Caco-2 (cell line): ENCODE measurements at regions of chr13 and their contacts with region 1.

Region 1: DNA sequence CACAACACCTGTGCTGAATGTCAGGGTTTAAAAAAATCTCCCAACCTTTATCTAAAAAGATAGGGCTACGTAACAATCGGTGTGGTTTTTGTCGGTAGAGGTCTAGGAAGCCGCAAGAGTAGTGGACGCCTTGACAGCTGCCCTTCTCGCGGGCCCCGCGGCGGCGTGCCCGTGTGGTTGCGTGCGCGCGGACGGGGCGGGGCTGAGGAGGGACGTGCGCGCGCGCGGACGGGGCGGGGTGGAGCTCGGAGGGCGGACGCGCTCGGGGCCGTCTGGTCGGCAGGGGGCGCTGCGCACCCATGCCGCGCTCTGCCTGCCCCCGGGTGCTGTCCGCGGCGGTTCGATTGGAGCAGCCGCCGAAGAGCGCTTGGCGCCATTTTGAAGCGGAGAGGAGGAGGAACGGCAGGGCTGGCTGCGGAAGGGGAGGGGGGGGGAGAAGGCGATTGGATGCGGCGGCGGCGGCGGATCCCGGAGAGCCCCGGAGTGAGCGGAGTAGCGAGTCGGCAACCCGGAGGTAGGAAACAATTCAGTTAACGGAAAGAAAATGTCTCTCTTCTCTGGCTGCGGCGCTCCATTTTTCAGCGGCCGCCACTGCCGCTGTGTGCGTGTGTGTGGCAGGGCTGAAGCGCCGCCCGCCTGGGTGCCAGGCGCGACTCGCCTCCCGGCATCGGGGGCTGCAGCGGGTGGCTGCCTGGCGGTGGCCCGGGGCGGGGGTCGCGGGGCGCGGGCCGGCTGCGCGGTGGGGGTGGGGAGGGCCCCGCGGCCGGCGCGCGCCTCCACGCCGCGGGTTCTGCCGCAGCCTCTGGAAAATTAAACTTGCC is at the start of gene PDS5B:
- DNase-seq: peak; percentile 96 to 98
- H3K4me3 ChIP-seq: peak within 1 kb of the TSS; percentile 97
- H3K4me3 Mint-ChIP-seq: peak within 1 kb of the TSS; percentile 89
- H3K27ac Mint-ChIP-seq: peak within 1 kb of the TSS; percentile 88
- H3K4me1 ChIP-seq: no peaks in the 10 kb centered on the region
- H3K4me1 Mint-ChIP-seq: peaks cover 13% of the 10 kb centered on the region
- H3K27me3 ChIP-seq: no peaks in the 10 kb centered on the region
- H3K27me3 Mint-ChIP-seq: peaks cover 6% of the 10 kb centered on the region
- CTCF ChIP-seq: peak; percentile 64 to 96
- total RNA-seq, gene PDS5B: 53.0 and 54.9 TPM in 2 replicates

Region 2: GRCh38 chr13:32639502-32640105 is 53.3 kb after region 1 on chr13:
- CTCF ChIA-PET with region 1: interaction called, 19 read pairs
- POLR2A ChIA-PET with region 1: no interaction called
- intact Hi-C with region 1: loop called (anchors 1 kb)
- DNase-seq: peak; percentile 54 to 64
- H3K4me3 ChIP-seq: no peak overlapping the region
- H3K4me3 Mint-ChIP-seq: no peak overlapping the region
- H3K27ac Mint-ChIP-seq: no peak overlapping the region
- H3K4me1 ChIP-seq: no peaks in the 10 kb centered on the region
- H3K4me1 Mint-ChIP-seq: peaks cover 12% of the 10 kb centered on the region
- H3K27me3 ChIP-seq: no peaks in the 10 kb centered on the region
- H3K27me3 Mint-ChIP-seq: no peaks in the 10 kb centered on the region
- CTCF ChIP-seq: peak; percentile 61 to 91

Region 3: DNA sequence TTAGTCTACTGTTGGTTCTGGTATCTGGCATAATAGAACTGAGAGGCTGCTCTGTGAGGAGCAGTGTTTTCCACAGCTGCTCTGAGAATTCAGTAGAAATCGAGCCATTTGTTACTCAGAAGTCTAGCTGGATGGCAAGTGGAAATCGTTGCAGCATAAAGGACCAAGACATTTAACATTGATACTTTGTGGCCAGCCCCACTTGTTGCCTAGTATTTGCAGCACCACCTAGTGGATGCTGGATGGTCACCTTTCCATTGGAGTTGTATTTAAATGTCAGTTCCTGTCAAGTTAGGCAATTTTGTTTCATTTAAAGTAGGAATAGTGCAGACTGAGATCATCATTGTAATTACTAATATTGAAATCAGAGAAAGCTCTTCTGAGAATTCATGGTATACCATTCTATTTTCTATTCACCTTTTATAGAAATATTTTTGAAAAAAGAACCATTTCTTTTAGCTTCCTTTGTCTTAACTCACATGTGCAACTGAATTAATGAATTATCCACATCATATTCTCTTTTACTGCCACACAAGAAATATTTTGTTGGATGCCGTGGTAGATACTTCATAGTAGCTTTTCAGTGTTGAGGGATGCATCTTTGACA is 64.5 kb after region 1 on chr13:
- CTCF ChIA-PET with region 1: interaction called, 6 read pairs
- POLR2A ChIA-PET with region 1: no interaction called
- intact Hi-C with region 1: loop called (anchors 2 kb)
- DNase-seq: peak; percentile 68 to 69
- H3K4me3 ChIP-seq: no peak overlapping the region
- H3K4me3 Mint-ChIP-seq: no peak overlapping the region
- H3K27ac Mint-ChIP-seq: no peak overlapping the region
- H3K4me1 ChIP-seq: no peaks in the 10 kb centered on the region
- H3K4me1 Mint-ChIP-seq: peaks cover 21% of the 10 kb centered on the region
- H3K27me3 ChIP-seq: no peaks in the 10 kb centered on the region
- H3K27me3 Mint-ChIP-seq: no peaks in the 10 kb centered on the region
- CTCF ChIP-seq: peak; percentile 77 to 84

Region 4: GRCh38 chr13:32669030-32669646 is 82.8 kb after region 1 on chr13:
- CTCF ChIA-PET with region 1: interaction called, 20 read pairs
- POLR2A ChIA-PET with region 1: no interaction called
- intact Hi-C with region 1: loop called (anchors 1 kb)
- DNase-seq: peak in 1 of 2 experiments; percentile 52
- H3K4me3 ChIP-seq: no peak overlapping the region
- H3K4me3 Mint-ChIP-seq: no peak overlapping the region
- H3K27ac Mint-ChIP-seq: no peak overlapping the region
- H3K4me1 ChIP-seq: no peaks in the 10 kb centered on the region
- H3K4me1 Mint-ChIP-seq: peaks cover 6% of the 10 kb centered on the region
- H3K27me3 ChIP-seq: no peaks in the 10 kb centered on the region
- H3K27me3 Mint-ChIP-seq: no peaks in the 10 kb centered on the region
- CTCF ChIP-seq: peak; percentile 77 to 80

Region 5: GRCh38 chr13:32911506-32911905 is 325.2 kb after region 1 on chr13:
- CTCF ChIA-PET with region 1: no interaction called
- POLR2A ChIA-PET with region 1: no interaction called
- intact Hi-C with region 1: loop called (anchors 10 kb)
- DNase-seq: peak; percentile 49 to 50
- H3K4me3 ChIP-seq: no peak overlapping the region
- H3K4me3 Mint-ChIP-seq: no peak overlapping the region
- H3K27ac Mint-ChIP-seq: no peak overlapping the region
- H3K4me1 ChIP-seq: no peaks in the 10 kb centered on the region
- H3K4me1 Mint-ChIP-seq: no peaks in the 10 kb centered on the region
- H3K27me3 ChIP-seq: no peaks in the 10 kb centered on the region
- H3K27me3 Mint-ChIP-seq: peaks cover 3% of the 10 kb centered on the region
- CTCF ChIP-seq: peak; percentile 45 to 64